ENCODE measurements at regions of chr7 and their contacts with region 1.

Region 1: GRCh38 chr7:18541871-18542212 is 46.3 kb downstream of the HDAC9 start:
- DNase-seq: no peak
- H3K4me3 ChIP-seq: no peak overlapping the region
- H3K27ac ChIP-seq: no peak overlapping the region
- H3K4me1 ChIP-seq: no peaks in the 10 kb centered on the region
- H3K27me3 ChIP-seq: no peaks in the 10 kb centered on the region
- CTCF ChIP-seq: no peak
- POLR2A ChIP-seq: no peak

Region 2: GRCh38 chr7:18330548-18330947 is 211.3 kb before region 1 on chr7:
- intact Hi-C with region 1: no loop called
- DNase-seq: no peak
- H3K4me3 ChIP-seq: no peak overlapping the region
- H3K27ac ChIP-seq: no peak overlapping the region
- H3K4me1 ChIP-seq: no peaks in the 10 kb centered on the region
- H3K27me3 ChIP-seq: no peaks in the 10 kb centered on the region
- CTCF ChIP-seq: no peak
- POLR2A ChIP-seq: no peak

Region 3: GRCh38 chr7:18529239-18529638 is 12.6 kb before region 1 on chr7:
- intact Hi-C with region 1: loop called (anchors 2 kb)
- DNase-seq: no peak
- H3K4me3 ChIP-seq: no peak overlapping the region
- H3K27ac ChIP-seq: no peak overlapping the region
- H3K4me1 ChIP-seq: no peaks in the 10 kb centered on the region
- H3K27me3 ChIP-seq: no peaks in the 10 kb centered on the region
- CTCF ChIP-seq: no peak
- POLR2A ChIP-seq: no peak

Measured in prostate gland (tissue), 2 donors.